ENCODE measurements at regions of chr1 and their contacts with region 1.

Region 1: DNA sequence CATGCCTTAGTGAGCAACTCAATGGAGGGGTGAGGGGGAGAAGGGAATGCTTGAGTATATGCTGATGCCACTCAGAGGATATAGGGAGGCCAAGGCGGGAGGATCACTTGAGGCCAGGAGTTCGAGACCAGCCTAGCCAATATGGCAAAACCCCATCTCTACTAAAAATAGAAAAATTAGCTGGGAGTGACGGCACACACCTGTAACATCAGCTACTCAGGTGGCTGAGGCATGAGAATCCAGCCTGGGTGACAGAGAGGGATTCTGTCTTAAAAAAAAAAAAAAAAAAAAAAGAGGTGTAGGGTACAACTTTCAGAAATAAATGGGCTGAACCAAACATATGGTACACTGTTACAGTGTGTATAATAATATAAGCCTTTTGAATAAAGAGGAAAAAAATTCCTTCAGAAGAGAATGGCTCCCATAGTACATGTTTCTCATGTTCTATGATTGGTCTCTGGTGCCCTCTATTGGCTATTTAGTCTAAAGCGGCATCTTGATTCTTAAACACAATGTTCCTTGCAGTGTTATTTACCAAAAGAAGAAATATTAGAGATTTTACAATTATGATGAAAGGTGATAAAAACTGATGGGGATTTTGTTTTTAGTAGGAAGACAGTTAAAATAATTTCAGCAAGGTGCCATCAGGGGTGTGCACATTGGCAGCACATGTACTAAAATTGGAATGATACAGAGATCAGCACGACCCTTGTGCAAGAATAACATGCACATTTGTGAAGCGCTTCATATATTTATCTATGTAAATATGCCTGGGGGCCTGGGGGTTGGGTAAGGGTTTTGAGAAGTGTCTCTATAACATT is 109.8 kb downstream of the PATJ start:
- DNase-seq: peak in 1 of 2 donors; percentile 45
- ATAC-seq: peak in 7 of 8 donors; percentile 62 to 83 (median 67)
- H3K4me3 ChIP-seq: no peak overlapping the region
- H3K27ac ChIP-seq: no peak overlapping the region
- H3K4me1 ChIP-seq: peaks cover 0 to 8% (median 0%) of the 10 kb centered on the region in 9 donors
- H3K27me3 ChIP-seq: no peaks in the 10 kb centered on the region
- CTCF ChIP-seq: peak; percentile 39 to 86 (median 77)

Region 2: GRCh38 chr1:59971464-59971911 is 1880.6 kb before region 1 on chr1:
- intact Hi-C with region 1: loop called in 9 of 10 experiments (anchors 5 to 10 kb)
- DNase-seq: peak; percentile 63 to 68
- ATAC-seq: peak; percentile 78 to 93 (median 86)
- H3K4me3 ChIP-seq: no peak overlapping the region
- H3K27ac ChIP-seq: no peak overlapping the region
- H3K4me1 ChIP-seq: peaks cover 0 to 7% (median under 1%) of the 10 kb centered on the region in 9 donors
- H3K27me3 ChIP-seq: peaks cover 0 to 6% (median 0%) of the 10 kb centered on the region in 7 donors
- CTCF ChIP-seq: peak; percentile 82 to 93 (median 90)

Region 3: DNA sequence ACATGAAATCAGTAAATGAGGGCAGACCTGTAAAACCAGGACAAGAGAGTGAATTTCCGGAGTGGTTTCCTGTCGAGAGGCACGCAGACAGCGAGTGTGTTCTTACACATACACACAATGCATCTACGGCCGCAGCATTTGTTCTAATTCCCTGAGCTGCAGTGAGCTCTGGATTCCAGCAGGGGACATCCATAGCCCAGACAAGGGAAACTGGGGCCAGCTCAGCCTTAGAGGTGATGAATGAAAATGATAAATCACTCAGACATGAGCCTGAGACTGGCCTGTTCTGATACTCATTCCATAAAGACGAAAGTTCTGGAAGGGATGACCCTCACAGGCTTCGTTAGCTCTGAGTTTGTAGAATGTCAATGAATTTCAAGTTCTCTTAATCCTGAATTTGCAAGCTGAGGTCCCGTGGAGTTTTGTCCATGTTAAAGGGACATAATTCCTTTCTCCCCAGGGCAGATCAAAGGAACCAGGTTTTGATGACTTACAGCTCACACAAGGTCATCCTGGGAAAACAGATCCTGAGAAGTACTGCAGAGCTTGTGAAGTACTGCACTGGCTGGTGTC is 1570.6 kb before region 1 on chr1:
- intact Hi-C with region 1: loop called in 3 of 10 experiments (anchors 5 to 10 kb)
- DNase-seq: peak; percentile 22 to 56
- ATAC-seq: peak; percentile 85 to 96 (median 90)
- H3K4me3 ChIP-seq: no peak overlapping the region
- H3K27ac ChIP-seq: no peak overlapping the region
- H3K4me1 ChIP-seq: peaks cover 0 to 19% (median 15%) of the 10 kb centered on the region in 9 donors
- H3K27me3 ChIP-seq: no peaks in the 10 kb centered on the region
- CTCF ChIP-seq: peak; percentile 83 to 95 (median 89)

Region 4: GRCh38 chr1:60969971-60970509 is 882.0 kb before region 1 on chr1:
- intact Hi-C with region 1: loop called in 7 of 10 experiments (anchors 2 to 10 kb)
- DNase-seq: no peak
- ATAC-seq: peak; percentile 52 to 83 (median 75)
- H3K4me3 ChIP-seq: peak overlapping the region in 1 of 10 donors; percentile 10
- H3K27ac ChIP-seq: peak overlapping the region in 7 of 10 donors; percentile 41 to 76 (median 66)
- H3K4me1 ChIP-seq: peaks cover 0 to 14% (median 8%) of the 10 kb centered on the region in 9 donors
- H3K27me3 ChIP-seq: no peaks in the 10 kb centered on the region
- CTCF ChIP-seq: peak; percentile 17 to 70 (median 60)

Region 5: DNA sequence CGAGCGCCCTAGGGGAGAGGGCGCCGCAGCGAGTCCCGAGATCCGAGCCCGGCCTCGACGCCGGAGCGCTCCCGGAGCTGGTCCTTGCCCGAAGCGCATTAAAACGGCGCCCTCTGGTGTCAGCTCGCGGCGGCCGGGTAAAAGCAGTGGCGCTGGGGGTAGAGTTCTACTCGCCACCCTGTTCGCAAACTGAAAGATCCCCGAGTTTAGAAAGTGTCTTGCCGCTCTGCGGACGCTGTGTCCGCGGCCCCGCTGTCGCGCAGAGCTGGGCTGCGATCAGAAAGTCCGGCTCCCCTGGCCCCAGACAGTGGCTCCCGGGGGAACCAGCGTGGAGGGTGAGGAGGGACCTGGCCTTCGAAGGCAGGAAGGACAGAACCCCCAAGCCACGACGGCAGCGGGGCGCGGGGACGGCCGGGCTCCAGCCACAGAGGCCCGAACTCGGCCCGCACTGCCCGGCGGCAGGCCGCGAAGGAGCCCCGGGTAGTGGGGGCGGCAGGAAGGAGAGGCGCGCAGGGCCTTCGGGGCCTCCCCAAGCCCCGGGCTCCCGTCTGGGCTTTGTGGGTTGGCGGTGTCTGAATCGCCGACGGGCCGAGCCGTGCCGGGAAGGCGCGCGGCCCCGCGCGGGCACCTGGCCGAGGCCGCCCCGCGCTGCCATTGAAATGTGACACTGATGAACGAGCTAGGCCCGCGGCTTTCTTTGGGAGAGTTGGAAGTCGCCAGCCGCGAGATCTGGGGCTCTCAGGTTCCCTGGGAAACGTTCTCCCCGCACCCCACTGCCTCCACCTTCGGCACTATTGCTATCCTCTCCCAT is 808.8 kb before region 1 on chr1:
- intact Hi-C with region 1: loop called in 6 of 10 experiments (anchors 5 to 10 kb)
- DNase-seq: peak; percentile 91 to 94
- ATAC-seq: peak; percentile 95 to 99 (median 97)
- H3K4me3 ChIP-seq: peak overlapping the region; percentile 23 to 70 (median 63)
- H3K27ac ChIP-seq: peak overlapping the region in 9 of 10 donors; percentile 46 to 85 (median 77)
- H3K4me1 ChIP-seq: peaks cover 0 to 11% (median 5%) of the 10 kb centered on the region in 9 donors
- H3K27me3 ChIP-seq: peaks cover 0 to 14% (median 0%) of the 10 kb centered on the region in 7 donors
- CTCF ChIP-seq: peak; percentile 82 to 96 (median 94)

Region 6: DNA sequence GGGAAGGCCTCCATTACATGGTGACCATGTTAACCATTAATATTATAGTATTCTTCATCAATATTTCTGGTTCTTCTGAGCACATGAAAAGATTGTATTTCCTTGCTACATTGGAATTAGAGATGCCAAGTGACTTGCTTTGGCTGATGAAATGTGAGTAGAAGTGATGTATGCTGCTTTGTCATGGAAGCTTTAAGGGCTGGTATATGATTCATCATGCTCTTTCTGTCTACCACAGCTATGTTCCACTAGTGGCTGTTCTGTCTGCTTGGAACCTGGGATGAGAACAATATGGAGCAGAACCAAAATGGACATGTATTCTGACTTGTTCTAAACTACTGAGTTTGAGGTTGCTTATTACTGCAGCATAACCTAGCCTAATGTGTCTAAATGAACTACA is 290.4 kb before region 1 on chr1:
- intact Hi-C with region 1: no loop called
- DNase-seq: no peak
- ATAC-seq: no peak
- H3K4me3 ChIP-seq: no peak overlapping the region
- H3K27ac ChIP-seq: no peak overlapping the region
- H3K4me1 ChIP-seq: no peaks in the 10 kb centered on the region
- H3K27me3 ChIP-seq: no peaks in the 10 kb centered on the region
- CTCF ChIP-seq: no peak

Region 7: GRCh38 chr1:61741711-61742619 is 110.1 kb before region 1 on chr1 and contains the start of gene PATJ:
- intact Hi-C with region 1: loop called in 1 of 10 experiments (anchors 5 kb)
- DNase-seq: peak; percentile 47 to 57
- ATAC-seq: peak; percentile 59 to 84 (median 75)
- H3K4me3 ChIP-seq: peak within 1 kb of the TSS; percentile 82 to 99 (median 93)
- H3K27ac ChIP-seq: peak within 1 kb of the TSS; percentile 90 to 99 (median 98)
- H3K4me1 ChIP-seq: peaks cover 0 to 22% (median 13%) of the 10 kb centered on the region in 9 donors
- H3K27me3 ChIP-seq: peaks cover 0 to 3% (median 0%) of the 10 kb centered on the region in 7 donors
- CTCF ChIP-seq: no peak
- total RNA-seq, gene PATJ: 74.1 to 213 (median 145) TPM

Measured in heart right ventricle (tissue), 16 donors.